Calu3 (cell line): ENCODE measurements at regions of chr5 and their contacts with region 1.

Region 1: DNA sequence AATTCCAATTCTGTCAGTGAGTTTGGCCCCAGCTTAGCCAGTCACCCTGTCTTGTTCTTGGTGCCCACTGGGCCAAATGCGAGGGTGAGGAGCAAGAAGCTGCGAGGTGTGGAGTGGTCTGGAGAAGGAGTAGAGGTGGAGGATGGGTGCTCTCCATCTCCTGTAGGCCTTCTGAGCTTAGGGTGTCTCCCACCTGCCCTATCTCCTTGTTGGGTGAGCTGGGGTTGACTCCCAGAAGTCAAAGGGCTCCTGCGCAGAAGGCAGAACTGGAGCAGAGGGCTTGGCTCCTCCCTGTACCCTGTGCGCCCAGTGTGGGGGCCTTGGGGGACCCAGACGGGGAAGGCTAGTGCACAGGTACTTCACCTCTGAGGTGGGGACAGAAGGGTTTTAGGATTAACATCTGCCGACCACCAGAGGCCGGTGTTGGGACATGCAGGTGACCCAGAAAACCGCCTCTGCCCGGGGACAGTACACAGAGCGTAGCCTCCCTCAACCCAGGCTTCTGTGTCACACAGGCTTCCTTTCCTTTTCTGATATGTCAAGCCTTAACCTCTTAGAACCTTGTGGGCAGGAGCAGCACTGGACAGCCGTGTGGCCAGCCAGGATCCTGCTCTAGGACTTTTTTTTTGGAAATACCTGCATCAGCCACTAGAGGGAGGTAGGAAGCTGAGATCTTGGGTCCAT is 16.9 kb downstream of the IL5 start:
- DNase-seq: peak; percentile 83
- H3K4me3 Mint-ChIP-seq: peak overlapping the region; percentile 42
- H3K27ac Mint-ChIP-seq: peak overlapping the region; percentile 12
- H3K4me1 Mint-ChIP-seq: peaks cover 11% of the 10 kb centered on the region
- H3K27me3 Mint-ChIP-seq: peaks cover 40% of the 10 kb centered on the region
- CTCF ChIP-seq: peak; percentile 95

Region 2: GRCh38 chr5:131242728-131243255 is 1283.6 kb before region 1 on chr5:
- CTCF ChIA-PET with region 1: no interaction called
- intact Hi-C with region 1: no loop called
- DNase-seq: no peak
- H3K4me3 Mint-ChIP-seq: no peak overlapping the region
- H3K27ac Mint-ChIP-seq: peak overlapping the region; percentile 63
- H3K4me1 Mint-ChIP-seq: peaks cover 19% of the 10 kb centered on the region
- H3K27me3 Mint-ChIP-seq: no peaks in the 10 kb centered on the region
- CTCF ChIP-seq: no peak

Region 3: GRCh38 chr5:132591145-132591544 is 64.7 kb after region 1 on chr5:
- CTCF ChIA-PET with region 1: no interaction called
- intact Hi-C with region 1: loop called (anchors 5 kb)
- DNase-seq: no peak
- H3K4me3 Mint-ChIP-seq: no peak overlapping the region
- H3K27ac Mint-ChIP-seq: no peak overlapping the region
- H3K4me1 Mint-ChIP-seq: peaks cover 14% of the 10 kb centered on the region
- H3K27me3 Mint-ChIP-seq: no peaks in the 10 kb centered on the region
- CTCF ChIP-seq: no peak

Region 4: GRCh38 chr5:132677191-132677590 is 150.8 kb after region 1 on chr5:
- CTCF ChIA-PET with region 1: interaction called, 10 read pairs
- intact Hi-C with region 1: loop called (anchors 1 kb)
- DNase-seq: peak; percentile 89
- H3K4me3 Mint-ChIP-seq: no peak overlapping the region
- H3K27ac Mint-ChIP-seq: no peak overlapping the region
- H3K4me1 Mint-ChIP-seq: peaks cover 45% of the 10 kb centered on the region
- H3K27me3 Mint-ChIP-seq: no peaks in the 10 kb centered on the region
- CTCF ChIP-seq: peak; percentile 76

Region 5: GRCh38 chr5:132714456-132715307 is 188.2 kb after region 1 on chr5:
- CTCF ChIA-PET with region 1: interaction called, 4 read pairs
- intact Hi-C with region 1: loop called (anchors 10 kb)
- DNase-seq: no peak
- H3K4me3 Mint-ChIP-seq: no peak overlapping the region
- H3K27ac Mint-ChIP-seq: no peak overlapping the region
- H3K4me1 Mint-ChIP-seq: no peaks in the 10 kb centered on the region
- H3K27me3 Mint-ChIP-seq: no peaks in the 10 kb centered on the region
- CTCF ChIP-seq: peak; percentile 30

Region 6: GRCh38 chr5:132883261-132883834 is 356.9 kb after region 1 on chr5:
- CTCF ChIA-PET with region 1: no interaction called
- intact Hi-C with region 1: loop called (anchors 5 kb)
- DNase-seq: peak; percentile 60
- H3K4me3 Mint-ChIP-seq: no peak overlapping the region
- H3K27ac Mint-ChIP-seq: peak overlapping the region; percentile 44
- H3K4me1 Mint-ChIP-seq: peaks cover 4% of the 10 kb centered on the region
- H3K27me3 Mint-ChIP-seq: no peaks in the 10 kb centered on the region
- CTCF ChIP-seq: peak; percentile 71

Region 7: GRCh38 chr5:132998556-132998955 is 472.1 kb after region 1 on chr5:
- CTCF ChIA-PET with region 1: no interaction called
- intact Hi-C with region 1: no loop called
- DNase-seq: no peak
- H3K4me3 Mint-ChIP-seq: no peak overlapping the region
- H3K27ac Mint-ChIP-seq: no peak overlapping the region
- H3K4me1 Mint-ChIP-seq: no peaks in the 10 kb centered on the region
- H3K27me3 Mint-ChIP-seq: no peaks in the 10 kb centered on the region
- CTCF ChIP-seq: no peak